ENCODE measurements at regions of chr7 and their contacts with region 1.

Region 1: GRCh38 chr7:44565097-44565794 is 8.5 kb downstream of the DDX56 start:
- DNase-seq: peak; percentile 62
- H3K4me3 Mint-ChIP-seq: no peak overlapping the region
- H3K27ac Mint-ChIP-seq: no peak overlapping the region
- H3K4me1 Mint-ChIP-seq: peaks cover 16% of the 10 kb centered on the region
- H3K27me3 Mint-ChIP-seq: no peaks in the 10 kb centered on the region
- CTCF ChIP-seq: peak; percentile 95

Region 2: DNA sequence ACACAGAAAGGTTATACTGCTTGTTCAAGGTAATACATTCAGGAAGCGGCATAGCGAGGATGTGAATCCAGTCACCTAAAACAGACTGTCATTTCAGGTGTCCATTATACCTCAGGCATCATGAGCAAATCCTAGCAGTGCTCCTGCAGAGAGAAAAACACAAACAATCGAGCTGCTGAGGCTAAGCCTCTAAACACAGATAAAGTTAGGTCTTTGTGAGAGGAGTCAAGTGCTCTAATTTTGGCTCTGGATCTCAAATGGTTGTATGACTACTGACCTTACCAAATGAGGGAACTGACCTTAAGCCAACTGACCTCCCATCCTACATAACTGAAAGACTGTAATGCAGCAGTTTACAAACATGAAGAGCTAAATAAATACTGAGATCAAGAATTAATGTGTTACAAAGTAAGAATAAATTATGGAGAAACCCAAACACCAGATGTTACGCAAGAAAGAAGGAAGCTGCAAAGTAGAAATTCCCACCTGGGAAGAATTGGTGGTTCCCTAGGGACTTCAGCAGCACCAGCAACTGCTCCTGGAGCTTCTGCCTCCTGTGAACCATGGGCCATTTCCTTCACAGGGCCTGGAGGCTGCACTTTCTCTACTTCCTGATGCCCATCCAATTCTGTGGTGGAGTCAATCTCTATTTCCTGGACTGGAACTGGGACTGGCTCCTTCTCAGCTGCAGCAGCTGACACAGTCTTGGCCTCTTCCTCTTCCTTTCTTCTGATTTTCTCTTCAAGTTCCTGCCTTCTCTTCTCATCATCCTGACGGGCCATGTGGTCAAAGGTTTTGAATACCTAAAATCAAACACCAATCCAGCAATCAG is 80.5 kb before region 1 on chr7:
- CTCF ChIA-PET with region 1: interaction called, 43 read pairs
- POLR2A ChIA-PET with region 1: interaction called, 52 read pairs
- intact Hi-C with region 1: loop called (anchors 1 kb)
- DNase-seq: no peak
- H3K4me3 Mint-ChIP-seq: no peak overlapping the region
- H3K27ac Mint-ChIP-seq: no peak overlapping the region
- H3K4me1 Mint-ChIP-seq: peaks cover 41% of the 10 kb centered on the region
- H3K27me3 Mint-ChIP-seq: no peaks in the 10 kb centered on the region
- CTCF ChIP-seq: no peak

Region 3: GRCh38 chr7:44498230-44498954 is 66.9 kb before region 1 on chr7:
- CTCF ChIA-PET with region 1: interaction called, 17 read pairs
- POLR2A ChIA-PET with region 1: no interaction called
- intact Hi-C with region 1: no loop called
- DNase-seq: no peak
- H3K4me3 Mint-ChIP-seq: no peak overlapping the region
- H3K27ac Mint-ChIP-seq: no peak overlapping the region
- H3K4me1 Mint-ChIP-seq: no peaks in the 10 kb centered on the region
- H3K27me3 Mint-ChIP-seq: no peaks in the 10 kb centered on the region
- CTCF ChIP-seq: no peak

Region 4: DNA sequence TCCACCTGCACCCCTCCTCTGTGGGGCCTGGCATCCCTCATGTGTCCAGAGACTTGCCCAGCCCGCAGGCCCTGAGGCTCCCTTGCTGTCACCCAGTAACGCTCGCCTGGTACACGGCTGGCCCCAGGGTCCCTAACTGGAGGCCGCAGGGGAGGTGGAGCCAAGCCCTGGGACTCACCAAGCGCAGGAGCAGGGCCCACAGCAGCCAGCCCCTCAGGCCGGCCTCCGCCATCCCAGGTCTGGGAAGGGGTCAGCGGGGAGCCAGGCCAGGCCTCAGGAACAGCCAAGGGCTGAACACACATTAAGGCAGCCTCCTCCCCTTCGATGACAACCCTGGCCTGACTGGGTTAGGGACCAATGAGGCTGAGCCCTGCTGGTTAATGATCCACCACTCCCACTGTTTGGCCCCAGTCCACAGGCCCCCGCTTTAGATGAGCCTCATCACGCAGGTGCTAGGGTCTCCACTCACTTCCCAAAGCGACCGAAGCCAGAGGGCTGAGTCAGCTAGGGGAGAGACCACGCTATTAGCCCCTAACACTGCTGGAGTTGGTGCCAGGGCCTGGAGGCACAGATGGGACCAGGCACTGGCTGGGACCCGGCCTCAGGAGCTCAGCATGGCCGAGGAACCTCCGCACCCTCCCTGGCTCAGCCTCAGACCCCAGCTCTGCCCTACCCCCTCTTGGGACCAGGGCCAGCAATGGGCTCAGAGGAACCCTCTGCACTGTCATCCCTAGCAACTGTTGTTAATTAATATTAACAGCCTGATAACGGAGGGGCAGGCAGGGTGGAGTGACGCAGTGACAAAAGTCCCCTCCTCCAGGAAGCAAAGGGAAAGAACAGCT is 24.0 kb before region 1 on chr7 and contains the start of gene NPC1L1:
- CTCF ChIA-PET with region 1: interaction called, 36 read pairs
- POLR2A ChIA-PET with region 1: interaction called, 15 read pairs
- intact Hi-C with region 1: no loop called
- DNase-seq: no peak
- H3K4me3 Mint-ChIP-seq: no peak within 1 kb of the TSS
- H3K27ac Mint-ChIP-seq: peak within 1 kb of the TSS; percentile 19
- H3K4me1 Mint-ChIP-seq: peaks cover 17% of the 10 kb centered on the region
- H3K27me3 Mint-ChIP-seq: no peaks in the 10 kb centered on the region
- CTCF ChIP-seq: no peak
- total RNA-seq, gene NPC1L1: 0.07 TPM in 1 of 2 replicates, not detected in the other

Measured in MCF 10A (cell line).